ENCODE measurements at regions of chr13 and their contacts with region 1.

Region 1: DNA sequence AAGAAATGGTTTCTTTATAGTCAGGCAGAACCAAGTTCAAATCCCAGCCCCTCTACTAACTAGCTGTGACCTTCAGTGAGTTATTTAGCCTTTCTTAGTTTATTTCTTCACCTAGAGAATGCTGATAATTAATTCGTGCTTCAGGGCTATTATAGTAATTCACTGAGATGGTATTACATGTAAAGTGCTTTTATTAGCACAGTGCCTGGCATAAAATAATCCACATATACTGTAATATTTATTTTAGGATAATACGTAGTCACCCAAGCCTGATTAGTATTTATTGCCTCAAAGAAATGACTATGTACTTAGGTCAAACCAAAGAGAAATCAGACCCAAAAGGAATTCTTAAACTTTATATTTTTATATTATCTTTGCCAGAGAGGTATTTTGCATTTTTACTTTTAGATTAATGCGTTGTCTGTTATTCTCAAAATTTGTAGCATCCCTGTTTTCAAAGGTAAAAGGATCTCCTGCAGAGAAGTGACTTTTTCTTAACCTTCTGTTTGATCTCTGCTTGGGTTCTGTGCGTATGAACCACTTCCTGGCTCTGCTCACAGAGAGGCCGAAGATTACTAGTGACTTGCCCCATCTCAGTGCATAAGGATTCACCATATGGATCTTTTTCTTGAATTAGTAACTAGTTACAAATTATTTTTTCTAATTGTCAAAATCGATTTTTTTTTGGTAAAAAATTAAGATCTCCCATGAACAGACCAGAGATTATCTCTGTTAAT is 19.7 kb downstream of the UBAC2 start:
- DNase-seq: no peak
- H3K4me3 ChIP-seq: no peak overlapping the region
- H3K27ac ChIP-seq: no peak overlapping the region
- H3K4me1 ChIP-seq: peaks cover 11 to 50% (median 16%) of the 10 kb centered on the region in 4 donors
- H3K27me3 ChIP-seq: no peaks in the 10 kb centered on the region
- CTCF ChIP-seq: no peak
- EP300 ChIP-seq: no peak
- POLR2A ChIP-seq: no peak

Region 2: GRCh38 chr13:98938801-98939200 is 281.6 kb before region 1 on chr13:
- in situ Hi-C with region 1: no loop called
- intact Hi-C with region 1: no loop called
- DNase-seq: no peak
- H3K4me3 ChIP-seq: no peak overlapping the region
- H3K27ac ChIP-seq: peak overlapping the region in 1 of 4 donors; percentile 41
- H3K4me1 ChIP-seq: no peaks in the 10 kb centered on the region
- H3K27me3 ChIP-seq: no peaks in the 10 kb centered on the region
- CTCF ChIP-seq: no peak
- EP300 ChIP-seq: no peak
- POLR2A ChIP-seq: no peak

Region 3: GRCh38 chr13:99264051-99264450 is 43.7 kb after region 1 on chr13:
- in situ Hi-C with region 1: no loop called
- intact Hi-C with region 1: loop called (anchors 5 kb)
- DNase-seq: no peak
- H3K4me3 ChIP-seq: no peak overlapping the region
- H3K27ac ChIP-seq: no peak overlapping the region
- H3K4me1 ChIP-seq: peaks cover 0 to 14% (median 1%) of the 10 kb centered on the region in 4 donors
- H3K27me3 ChIP-seq: no peaks in the 10 kb centered on the region
- CTCF ChIP-seq: no peak
- EP300 ChIP-seq: no peak
- POLR2A ChIP-seq: no peak

Region 4: DNA sequence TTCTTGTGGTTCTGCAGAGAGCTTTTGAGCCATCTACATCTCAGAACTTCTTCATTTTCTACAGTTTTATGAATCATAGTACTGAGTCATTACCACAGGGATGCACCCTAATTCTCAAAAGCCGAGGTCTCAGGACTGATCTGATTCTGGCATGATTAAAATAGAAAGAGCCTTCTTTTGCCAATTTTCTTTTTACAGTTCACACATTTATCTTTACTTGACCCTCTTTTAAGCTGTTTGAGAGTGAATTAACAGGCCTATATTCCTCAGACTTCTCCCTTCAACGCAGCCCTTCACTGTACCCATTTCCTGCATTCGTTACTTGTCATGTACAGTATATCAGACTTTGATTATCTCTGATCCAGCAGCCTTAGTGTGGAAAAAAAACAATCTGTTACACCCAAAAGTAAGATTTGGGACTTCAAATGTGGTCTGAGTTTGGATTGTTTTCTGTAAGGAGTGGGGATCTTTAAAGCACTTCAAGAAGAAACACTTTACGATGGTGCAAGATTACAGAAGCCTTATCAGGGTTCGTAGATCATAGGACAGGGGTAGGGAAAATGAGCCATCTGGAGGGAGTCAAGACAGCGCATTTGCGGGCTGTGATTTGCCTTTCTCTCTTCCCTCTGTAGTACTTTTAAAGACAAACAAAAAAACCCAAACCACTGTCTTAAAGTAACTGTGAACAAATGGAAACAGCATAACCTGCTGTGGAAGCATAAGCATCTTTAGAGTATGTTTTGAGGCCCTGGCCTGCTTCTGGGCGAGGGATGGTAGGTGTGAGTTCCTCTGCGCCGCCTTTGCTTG is 102.1 kb after region 1 on chr13:
- in situ Hi-C with region 1: no loop called
- intact Hi-C with region 1: no loop called
- DNase-seq: no peak
- H3K4me3 ChIP-seq: no peak overlapping the region
- H3K27ac ChIP-seq: peak overlapping the region; percentile 56 to 64 (median 60)
- H3K4me1 ChIP-seq: peaks cover 0 to 26% (median 11%) of the 10 kb centered on the region in 4 donors
- H3K27me3 ChIP-seq: no peaks in the 10 kb centered on the region
- CTCF ChIP-seq: no peak
- EP300 ChIP-seq: no peak
- POLR2A ChIP-seq: no peak

Measured in transverse colon (tissue), 4 donors.